ENCODE measurements at regions of chr19 and their contacts with region 1.

Region 1: GRCh38 chr19:35716801-35717666 is 769 bp upstream of the KMT2B start:
- DNase-seq: peak; percentile 96
- H3K4me3 ChIP-seq: peak overlapping the region; percentile 96
- H3K27ac ChIP-seq: peak overlapping the region; percentile 95
- H3K4me1 ChIP-seq: peaks cover 44% of the 10 kb centered on the region
- H3K27me3 ChIP-seq: no peaks in the 10 kb centered on the region
- CTCF ChIP-seq: peak; percentile 91

Region 2: GRCh38 chr19:35673121-35673804 is 43.8 kb before region 1 on chr19:
- intact Hi-C with region 1: no loop called
- DNase-seq: peak; percentile 33
- H3K4me3 ChIP-seq: peak overlapping the region; percentile 57
- H3K27ac ChIP-seq: no peak overlapping the region
- H3K4me1 ChIP-seq: peaks cover 6% of the 10 kb centered on the region
- H3K27me3 ChIP-seq: peaks cover 66% of the 10 kb centered on the region
- CTCF ChIP-seq: no peak

Region 3: GRCh38 chr19:35696835-35697234 is 20.2 kb before region 1 on chr19:
- intact Hi-C with region 1: loop called (anchors 2 kb)
- DNase-seq: no peak
- H3K4me3 ChIP-seq: no peak overlapping the region
- H3K27ac ChIP-seq: no peak overlapping the region
- H3K4me1 ChIP-seq: peaks cover 2% of the 10 kb centered on the region
- H3K27me3 ChIP-seq: no peaks in the 10 kb centered on the region
- CTCF ChIP-seq: no peak

Region 4: DNA sequence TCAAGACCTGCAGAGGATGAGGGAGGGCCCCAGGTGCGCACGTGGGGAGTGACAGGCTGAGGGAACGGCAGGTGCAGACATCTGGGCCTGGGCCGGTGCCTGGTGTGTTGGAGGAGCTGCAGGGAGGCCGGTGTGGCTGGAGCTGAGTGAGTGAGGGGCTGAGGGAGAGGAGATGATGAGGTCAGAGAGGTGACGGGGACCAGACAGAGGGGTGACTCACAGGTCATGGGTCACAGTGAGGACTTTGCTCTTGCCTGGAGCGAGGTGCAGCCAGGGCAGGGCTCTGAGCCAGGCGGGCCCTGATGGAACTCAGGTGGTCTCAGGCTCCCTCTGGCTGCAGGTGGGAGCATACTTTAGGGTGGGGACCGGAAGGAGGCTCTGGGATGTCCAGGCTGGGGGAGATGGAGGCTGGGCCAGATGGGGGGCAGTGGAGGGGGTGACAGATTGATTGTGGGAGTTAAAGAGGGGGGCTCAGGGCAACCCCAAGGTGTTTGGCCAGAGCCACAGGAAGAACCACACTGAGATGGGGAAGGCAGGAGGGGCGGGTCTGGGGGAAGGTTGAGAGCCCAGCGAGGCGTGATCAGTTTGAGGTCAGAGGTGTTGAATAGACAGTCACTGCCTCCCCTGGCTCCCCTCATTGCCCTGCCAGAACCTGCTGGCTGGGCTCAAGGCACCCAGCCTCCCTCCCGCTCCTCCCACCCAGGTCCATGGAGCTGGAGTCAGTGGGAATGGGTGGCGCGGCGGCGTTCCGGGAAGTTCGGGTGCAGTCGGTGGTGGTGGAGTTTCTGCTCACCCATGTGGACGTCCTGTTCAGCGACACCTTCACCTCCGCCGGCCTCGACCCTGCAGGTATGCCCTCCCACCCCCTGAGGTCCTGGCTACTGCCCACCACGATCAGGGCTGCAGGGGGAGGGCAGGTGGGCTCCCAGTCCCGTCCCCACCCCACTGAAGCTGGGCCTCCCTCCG is 66.7 kb after region 1 on chr19:
- intact Hi-C with region 1: no loop called
- DNase-seq: no peak
- H3K4me3 ChIP-seq: no peak overlapping the region
- H3K27ac ChIP-seq: no peak overlapping the region
- H3K4me1 ChIP-seq: no peaks in the 10 kb centered on the region
- H3K27me3 ChIP-seq: no peaks in the 10 kb centered on the region
- CTCF ChIP-seq: no peak